Activated T-helper 2 cell treated with anti-CD3 and anti-CD28 coated beads, Interferon-gamma antibody, Interleukin-2, Interleukin-4, amounts not matched to agents 10 μg/mL and 5 μg/mL and 100 μg/mL, durations not matched to agents 14 hours and 24 hours and 36 hours (primary cell): ENCODE measurements at regions of chr17 and their contacts with region 1.

Region 1: DNA sequence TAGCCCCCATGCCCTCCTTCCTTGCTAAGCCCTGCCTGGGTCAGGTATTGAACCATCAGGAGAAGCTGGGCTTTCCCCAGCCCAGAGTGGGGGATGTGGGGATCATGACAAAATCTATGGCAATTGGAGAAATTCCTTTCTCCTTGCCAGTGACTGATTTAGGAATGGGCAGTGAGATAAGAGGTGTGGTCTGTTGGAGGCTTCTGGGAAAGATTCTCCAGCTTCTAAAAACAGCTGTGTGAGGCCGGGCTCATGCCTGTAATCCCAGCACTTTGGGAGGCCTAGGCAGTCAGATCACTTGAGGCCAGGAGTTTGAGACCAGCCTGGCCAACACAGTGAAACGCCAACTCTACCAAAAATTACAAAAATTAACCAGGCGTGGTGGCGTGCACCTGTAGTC is 69.1 kb downstream of the SRCIN1 start:
- DNase-seq: no peak
- H3K4me3 Mint-ChIP-seq: no peak overlapping the region
- H3K27ac Mint-ChIP-seq: no peak overlapping the region
- H3K4me1 Mint-ChIP-seq: no peaks in the 10 kb centered on the region
- H3K27me3 Mint-ChIP-seq: peaks cover 3% of the 10 kb centered on the region

Region 2: GRCh38 chr17:38498186-38498752 is 38.4 kb before region 1 on chr17:
- intact Hi-C with region 1: loop called (anchors 2 kb)
- DNase-seq: no peak
- H3K4me3 Mint-ChIP-seq: no peak overlapping the region
- H3K27ac Mint-ChIP-seq: no peak overlapping the region
- H3K4me1 Mint-ChIP-seq: no peaks in the 10 kb centered on the region
- H3K27me3 Mint-ChIP-seq: no peaks in the 10 kb centered on the region